RWPE1 (cell line): ENCODE measurements at regions of chr9 and their contacts with region 1.

Region 1: DNA sequence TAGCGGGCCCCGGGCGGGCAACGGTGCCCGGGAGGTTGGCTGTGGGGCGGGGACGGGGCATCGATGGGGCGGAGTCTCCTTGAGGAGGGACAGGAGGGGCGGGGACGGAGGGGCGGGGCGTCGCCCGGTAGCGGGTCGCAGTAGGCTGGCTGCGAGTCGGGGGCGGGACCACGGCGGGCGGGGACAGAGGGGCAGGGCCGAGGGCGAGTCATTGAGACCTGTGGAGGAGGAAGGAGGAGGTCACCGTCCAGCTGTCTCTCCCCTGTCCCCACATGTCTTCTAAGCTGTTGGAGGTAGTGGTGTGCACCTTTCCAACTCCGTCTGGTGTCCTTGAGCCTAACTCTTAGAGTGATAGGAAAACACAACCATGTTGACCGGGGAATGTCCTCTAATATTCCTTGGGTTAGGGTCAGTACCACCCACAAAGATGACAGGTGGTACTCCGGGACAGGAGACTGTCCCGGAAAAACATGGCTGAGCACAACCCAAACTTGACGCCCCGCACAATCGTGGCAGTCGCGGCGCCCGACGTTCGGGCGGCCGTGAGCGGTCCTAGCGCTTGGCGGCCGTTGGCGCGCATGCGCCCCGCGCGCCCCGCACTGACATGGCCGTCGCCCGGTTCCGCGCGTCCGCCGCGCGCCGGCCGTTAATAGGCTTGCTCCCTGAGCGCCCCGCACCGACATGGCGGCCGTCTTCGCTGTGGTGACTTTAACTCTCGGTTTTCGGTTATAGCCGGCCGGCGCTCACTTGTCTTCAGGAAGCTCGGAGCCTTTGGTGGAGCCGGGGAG is at the starts of genes CRAT and PTPA:
- DNase-seq: peak; percentile 100
- H3K27ac ChIP-seq: peak within 1 kb of the TSS; percentile 94
- CTCF ChIP-seq: no peak

Region 2: DNA sequence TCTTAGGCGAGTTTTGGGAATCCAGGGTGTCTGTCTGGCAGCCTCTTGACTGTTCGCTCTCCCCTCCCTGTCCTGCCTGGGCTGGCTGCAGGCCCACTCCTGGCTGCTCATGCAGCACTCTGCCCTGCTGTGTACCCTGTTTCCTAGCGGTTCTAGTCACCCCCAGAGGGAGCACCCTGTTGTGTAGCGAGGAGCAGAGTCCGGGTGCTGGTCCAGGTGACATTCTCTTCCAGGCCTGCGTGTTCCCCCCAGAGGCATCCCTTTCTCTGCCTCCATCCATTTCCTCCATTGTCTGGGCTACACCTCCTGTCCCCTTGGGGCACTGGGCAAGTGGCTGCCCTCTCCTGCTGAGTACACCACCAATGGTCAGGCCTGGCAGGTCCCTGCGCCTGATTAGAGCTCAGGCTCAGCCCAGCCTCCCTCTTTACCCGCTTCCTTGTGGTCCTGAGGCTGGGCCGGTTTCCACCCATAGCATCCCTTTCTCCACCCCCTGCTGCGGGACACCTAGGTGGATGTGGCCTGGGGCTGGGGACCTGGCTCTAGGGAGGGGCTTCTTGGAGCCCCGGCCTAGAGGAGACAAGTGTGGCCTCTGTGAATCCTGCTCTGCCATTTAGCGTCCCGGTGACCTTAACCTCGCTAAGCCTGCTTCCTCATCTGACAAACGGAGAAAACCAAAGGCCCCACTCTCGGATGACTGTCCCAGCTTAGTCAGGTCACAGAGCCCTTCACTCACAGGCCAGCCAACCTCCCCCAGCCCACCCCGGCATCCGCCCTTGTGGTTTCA is 17.3 kb before region 1 on chr9:
- CTCF ChIA-PET with region 1: no interaction called
- POLR2A ChIA-PET with region 1: interaction called, 11 read pairs
- DNase-seq: no peak
- H3K27ac ChIP-seq: 0 out of 2 replicates have a peak overlapping the region, but pooled peaks have one; percentile 1
- CTCF ChIP-seq: no peak

Region 3: DNA sequence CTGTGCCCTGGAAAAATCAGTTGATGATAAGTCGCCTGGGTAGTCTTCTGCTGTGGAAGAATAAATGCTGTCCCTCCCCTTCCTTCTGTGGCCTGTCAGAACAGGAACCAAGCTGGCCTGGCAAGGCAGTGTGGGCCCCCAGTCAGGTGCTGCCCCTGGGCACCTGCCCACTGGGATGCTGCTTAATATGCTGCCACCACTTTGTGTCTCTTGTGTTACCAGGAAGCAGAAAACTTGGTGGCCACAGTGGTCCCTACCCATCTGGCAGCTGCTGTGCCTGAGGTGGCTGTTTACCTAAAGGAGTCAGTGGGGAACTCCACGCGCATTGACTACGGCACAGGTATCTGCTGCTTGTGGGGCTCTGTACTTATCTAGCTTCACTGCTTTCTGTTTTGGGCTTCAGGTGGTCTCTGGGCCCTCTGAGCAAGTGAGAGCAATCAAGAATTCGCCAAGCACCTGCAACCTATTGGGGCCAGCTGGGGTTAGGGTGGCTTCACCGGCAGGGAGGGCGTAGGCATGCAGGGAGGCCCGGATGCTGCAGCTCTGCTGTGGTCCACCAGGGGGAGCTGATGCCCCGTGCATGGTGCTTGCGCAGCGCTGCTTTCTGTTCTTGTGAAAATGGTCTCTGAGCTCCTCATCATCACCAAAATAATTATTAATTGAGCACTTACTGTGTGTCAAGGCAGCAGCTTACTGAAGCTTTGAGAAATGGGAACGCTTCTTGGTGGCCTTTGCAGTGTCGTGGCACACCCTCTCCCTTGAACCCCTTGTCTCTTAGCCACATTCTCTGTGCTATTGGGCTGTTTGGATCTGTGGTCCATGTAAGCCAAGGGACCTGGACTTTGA is 20.6 kb after region 1 on chr9:
- CTCF ChIA-PET with region 1: interaction called, 18 read pairs
- POLR2A ChIA-PET with region 1: no interaction called
- DNase-seq: peak; percentile 89
- H3K27ac ChIP-seq: peak overlapping the region; percentile 25
- CTCF ChIP-seq: peak; percentile 100